CD8-positive, alpha-beta T cell (primary cell): ENCODE measurements at regions of chr14 and their contacts with region 1.

Region 1: GRCh38 chr14:49867831-49868723 is 15.5 kb upstream of the NEMF start:
- DNase-seq: peak; percentile 95 to 99 (median 98)
- ATAC-seq: peak; percentile 83
- H3K4me3 ChIP-seq: peak overlapping the region; percentile 57 to 61
- H3K4me3 Mint-ChIP-seq: peak overlapping the region; percentile 91
- H3K27ac ChIP-seq: peak overlapping the region; percentile 79 to 94
- H3K27ac Mint-ChIP-seq: peak overlapping the region; percentile 92
- H3K4me1 ChIP-seq: peaks cover 34% of the 10 kb centered on the region
- H3K4me1 Mint-ChIP-seq: peaks cover 22% of the 10 kb centered on the region
- H3K27me3 ChIP-seq: no peaks in the 10 kb centered on the region
- H3K27me3 Mint-ChIP-seq: no peaks in the 10 kb centered on the region
- CTCF ChIP-seq: no peak

Region 2: GRCh38 chr14:49852301-49853157 is 15.5 kb before region 1 on chr14 and contains the start of gene NEMF:
- CTCF ChIA-PET with region 1: interaction called, 124 read pairs
- POLR2A ChIA-PET with region 1: interaction called, 74 read pairs
- intact Hi-C with region 1: no loop called
- DNase-seq: peak; percentile 56 to 92 (median 79)
- ATAC-seq: peak; percentile 78
- H3K4me3 ChIP-seq: peak within 1 kb of the TSS; percentile 75 to 88
- H3K4me3 Mint-ChIP-seq: peak within 1 kb of the TSS; percentile 100
- H3K27ac ChIP-seq: peak within 1 kb of the TSS; percentile 68 to 82
- H3K27ac Mint-ChIP-seq: peak within 1 kb of the TSS; percentile 99
- H3K4me1 ChIP-seq: peaks cover 29% of the 10 kb centered on the region
- H3K4me1 Mint-ChIP-seq: peaks cover 42% of the 10 kb centered on the region
- H3K27me3 ChIP-seq: no peaks in the 10 kb centered on the region
- H3K27me3 Mint-ChIP-seq: no peaks in the 10 kb centered on the region
- CTCF ChIP-seq: peak; percentile 69
- total RNA-seq, gene NEMF: 101 to 106 TPM

Region 3: DNA sequence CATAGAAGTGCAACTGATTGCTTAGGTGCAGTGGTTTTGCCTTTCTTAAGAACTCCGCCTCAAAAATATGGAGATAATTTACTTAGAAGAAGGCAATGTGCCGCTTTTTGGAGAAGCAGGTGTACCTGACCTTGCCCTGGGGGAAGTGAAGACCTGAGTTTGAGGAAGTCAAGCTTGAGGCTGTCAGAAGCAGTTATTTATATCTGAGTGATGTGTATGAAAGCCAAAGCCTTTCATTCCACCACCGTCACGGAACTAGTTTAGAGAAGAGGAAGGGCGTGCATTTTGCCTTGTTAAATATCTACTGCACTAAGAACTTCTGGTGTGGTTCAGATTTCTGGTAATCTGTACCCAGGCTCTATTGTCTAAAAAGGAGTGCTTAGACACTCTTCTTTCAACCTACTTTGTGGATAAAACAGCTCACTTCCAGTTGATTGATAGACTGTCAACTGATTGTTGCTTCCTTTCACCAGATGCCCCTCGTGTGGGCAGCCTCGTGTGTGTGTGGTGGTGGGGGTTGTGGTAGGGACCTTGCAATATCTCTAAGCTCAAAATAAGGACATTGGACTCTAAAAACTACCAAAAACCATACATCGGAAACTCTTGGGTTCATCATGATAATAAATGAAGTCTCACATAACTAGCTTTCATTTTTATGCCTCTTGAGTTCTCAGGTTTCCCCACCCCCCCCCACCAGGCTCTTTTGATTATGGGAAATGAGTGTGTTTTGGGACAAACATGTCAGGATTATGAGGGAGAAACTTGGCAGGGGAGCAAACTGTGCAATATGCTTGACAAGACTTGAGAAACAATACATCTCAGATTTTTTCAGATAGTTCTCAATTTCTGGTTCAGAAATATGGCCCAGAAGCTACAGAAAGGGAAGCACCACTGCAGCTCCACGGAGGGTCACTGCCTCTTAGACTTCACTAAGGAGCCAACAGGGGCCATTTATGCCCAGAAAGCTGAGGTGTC is 103.4 kb after region 1 on chr14:
- CTCF ChIA-PET with region 1: interaction called, 19 read pairs
- POLR2A ChIA-PET with region 1: interaction called, 24 read pairs
- intact Hi-C with region 1: loop called in 1 of 2 experiments (anchors 10 kb)
- DNase-seq: peak in 8 of 9 experiments; percentile 31 to 83 (median 61)
- ATAC-seq: peak; percentile 84
- H3K4me3 ChIP-seq: peak overlapping the region; percentile 25 to 31
- H3K4me3 Mint-ChIP-seq: peak overlapping the region; percentile 78
- H3K27ac ChIP-seq: peak overlapping the region; percentile 62 to 87
- H3K27ac Mint-ChIP-seq: peak overlapping the region; percentile 98
- H3K4me1 ChIP-seq: peaks cover 41% of the 10 kb centered on the region
- H3K4me1 Mint-ChIP-seq: peaks cover 60% of the 10 kb centered on the region
- H3K27me3 ChIP-seq: no peaks in the 10 kb centered on the region
- H3K27me3 Mint-ChIP-seq: no peaks in the 10 kb centered on the region
- CTCF ChIP-seq: no peak

Region 4: GRCh38 chr14:50045039-50045711 is 177.1 kb after region 1 on chr14:
- CTCF ChIA-PET with region 1: interaction called, 10 read pairs
- POLR2A ChIA-PET with region 1: interaction called, 12 read pairs
- intact Hi-C with region 1: loop called in 1 of 2 experiments (anchors 2 kb)
- DNase-seq: peak; percentile 27 to 86 (median 72)
- ATAC-seq: peak; percentile 77
- H3K4me3 ChIP-seq: peak overlapping the region in 1 of 2 experiments; percentile 17
- H3K4me3 Mint-ChIP-seq: peak overlapping the region; percentile 56
- H3K27ac ChIP-seq: peak overlapping the region; percentile 63 to 89
- H3K27ac Mint-ChIP-seq: peak overlapping the region; percentile 91
- H3K4me1 ChIP-seq: peaks cover 62% of the 10 kb centered on the region
- H3K4me1 Mint-ChIP-seq: peaks cover 65% of the 10 kb centered on the region
- H3K27me3 ChIP-seq: no peaks in the 10 kb centered on the region
- H3K27me3 Mint-ChIP-seq: no peaks in the 10 kb centered on the region
- CTCF ChIP-seq: no peak

Region 5: GRCh38 chr14:50099335-50099734 is 231.3 kb after region 1 on chr14:
- CTCF ChIA-PET with region 1: interaction called, 186 read pairs
- POLR2A ChIA-PET with region 1: interaction called, 18 read pairs
- intact Hi-C with region 1: no loop called
- DNase-seq: no peak
- ATAC-seq: no peak
- H3K4me3 ChIP-seq: no peak overlapping the region
- H3K4me3 Mint-ChIP-seq: no peak overlapping the region
- H3K27ac ChIP-seq: no peak overlapping the region
- H3K27ac Mint-ChIP-seq: peak overlapping the region; percentile 69
- H3K4me1 ChIP-seq: peaks cover 73% of the 10 kb centered on the region
- H3K4me1 Mint-ChIP-seq: peaks cover 71% of the 10 kb centered on the region
- H3K27me3 ChIP-seq: no peaks in the 10 kb centered on the region
- H3K27me3 Mint-ChIP-seq: no peaks in the 10 kb centered on the region
- CTCF ChIP-seq: no peak

Region 6: GRCh38 chr14:50231475-50232275 is 363.6 kb after region 1 on chr14 and contains the start of gene SOS2:
- CTCF ChIA-PET with region 1: no interaction called
- POLR2A ChIA-PET with region 1: interaction called, 4 read pairs
- intact Hi-C with region 1: loop called (anchors 2 to 10 kb)
- DNase-seq: peak; percentile 63 to 91 (median 83)
- ATAC-seq: peak; percentile 78
- H3K4me3 ChIP-seq: peak within 1 kb of the TSS; percentile 77 to 86
- H3K4me3 Mint-ChIP-seq: peak within 1 kb of the TSS; percentile 86
- H3K27ac ChIP-seq: peak within 1 kb of the TSS; percentile 81 to 84
- H3K27ac Mint-ChIP-seq: peak within 1 kb of the TSS; percentile 94
- H3K4me1 ChIP-seq: peaks cover 16% of the 10 kb centered on the region
- H3K4me1 Mint-ChIP-seq: peaks cover 36% of the 10 kb centered on the region
- H3K27me3 ChIP-seq: no peaks in the 10 kb centered on the region
- H3K27me3 Mint-ChIP-seq: no peaks in the 10 kb centered on the region
- CTCF ChIP-seq: no peak
- total RNA-seq, gene SOS2: 46.8 to 50.2 TPM

Region 7: DNA sequence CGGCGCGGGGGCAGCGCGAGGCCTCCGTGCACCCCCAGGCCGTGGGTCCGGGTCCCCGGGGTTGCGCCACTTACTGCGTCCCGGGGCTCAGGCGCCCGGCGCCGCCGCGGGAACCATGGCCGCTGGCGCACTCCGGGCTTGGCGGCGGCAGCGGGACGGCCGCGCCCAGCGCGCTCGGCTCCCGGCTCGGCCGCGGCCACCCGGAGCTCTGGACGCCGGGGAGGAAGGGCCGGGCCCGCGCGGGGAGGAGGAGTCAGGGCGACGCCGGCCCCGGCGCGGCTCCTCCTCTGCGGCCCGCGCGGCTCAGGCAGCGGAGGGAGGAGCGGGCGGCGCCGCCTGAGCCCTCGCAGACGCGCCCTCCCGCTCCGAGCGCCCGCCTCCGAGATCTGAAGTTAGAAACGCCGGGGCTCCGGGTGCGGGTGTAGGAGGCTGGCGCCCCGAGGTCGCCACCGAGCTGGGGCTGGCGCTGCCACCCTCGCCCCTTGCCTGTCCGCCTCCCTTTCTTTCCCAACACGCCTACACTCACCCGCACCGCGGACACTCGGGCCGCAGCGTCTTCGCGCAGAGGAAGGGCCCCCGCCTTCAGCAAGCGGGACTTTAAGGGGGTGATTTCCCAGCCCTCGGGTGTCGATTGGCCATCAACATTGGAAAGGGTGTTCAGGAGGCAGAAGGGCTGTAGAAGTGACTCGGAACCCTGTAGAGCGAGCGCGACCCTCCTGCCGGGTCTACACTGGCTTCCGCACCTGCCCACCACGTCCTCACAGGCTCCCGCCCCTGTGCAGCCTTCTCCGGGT is 963.1 kb after region 1 on chr14 and contains the start of gene NIN:
- CTCF ChIA-PET with region 1: no interaction called
- POLR2A ChIA-PET with region 1: no interaction called
- intact Hi-C with region 1: loop called in 1 of 2 experiments (anchors 10 kb)
- DNase-seq: peak; percentile 44 to 89 (median 75)
- ATAC-seq: peak; percentile 80
- H3K4me3 ChIP-seq: peak within 1 kb of the TSS; percentile 79 to 86
- H3K4me3 Mint-ChIP-seq: peak within 1 kb of the TSS; percentile 97
- H3K27ac ChIP-seq: peak within 1 kb of the TSS; percentile 76 to 87
- H3K27ac Mint-ChIP-seq: peak within 1 kb of the TSS; percentile 98
- H3K4me1 ChIP-seq: peaks cover 50% of the 10 kb centered on the region
- H3K4me1 Mint-ChIP-seq: peaks cover 68% of the 10 kb centered on the region
- H3K27me3 ChIP-seq: no peaks in the 10 kb centered on the region
- H3K27me3 Mint-ChIP-seq: no peaks in the 10 kb centered on the region
- CTCF ChIP-seq: no peak
- total RNA-seq, gene NIN: 121 to 132 TPM